ENCODE measurements at regions of chr2 and their contacts with region 1.

Region 1: DNA sequence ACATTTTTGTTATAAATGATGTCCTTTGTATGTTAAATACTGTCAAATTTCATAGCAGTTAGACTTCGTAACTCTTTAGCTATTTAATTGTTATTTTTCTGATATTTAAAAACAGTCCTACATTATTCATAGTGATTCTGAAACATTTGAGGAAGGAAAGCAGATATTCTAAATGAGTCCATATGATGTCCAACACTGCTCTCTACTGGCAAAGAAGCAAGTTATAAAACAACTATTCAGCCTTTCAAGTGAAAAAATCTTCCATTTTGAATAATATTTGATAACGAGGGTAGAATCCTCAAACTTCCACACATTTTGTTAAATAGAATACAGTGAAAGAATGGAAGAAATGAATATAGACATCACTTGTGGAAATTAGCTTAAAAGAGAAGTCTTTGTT is 220.8 kb downstream of the GULP1 start:
- DNase-seq: peak; percentile 69
- H3K4me3 ChIP-seq: no peak overlapping the region
- H3K27ac ChIP-seq: no peak overlapping the region
- H3K4me1 ChIP-seq: peaks cover 2% of the 10 kb centered on the region
- H3K27me3 ChIP-seq: no peaks in the 10 kb centered on the region
- CTCF ChIP-seq: peak; percentile 9 to 32
- POLR2A ChIP-seq: no peak

Region 2: GRCh38 chr2:187594801-187595200 is 917.7 kb before region 1 on chr2:
- CTCF ChIA-PET with region 1: interaction called, 10 read pairs
- POLR2A ChIA-PET with region 1: no interaction called
- dilution Hi-C with region 1: no loop called
- intact Hi-C with region 1: loop called (anchors 5 kb)
- DNase-seq: peak; percentile 44
- H3K4me3 ChIP-seq: no peak overlapping the region
- H3K27ac ChIP-seq: no peak overlapping the region
- H3K4me1 ChIP-seq: no peaks in the 10 kb centered on the region
- H3K27me3 ChIP-seq: no peaks in the 10 kb centered on the region
- CTCF ChIP-seq: no peak
- POLR2A ChIP-seq: no peak

Region 3: GRCh38 chr2:188381614-188382013 is 130.8 kb before region 1 on chr2:
- CTCF ChIA-PET with region 1: no interaction called
- POLR2A ChIA-PET with region 1: no interaction called
- dilution Hi-C with region 1: no loop called
- intact Hi-C with region 1: loop called (anchors 5 kb)
- DNase-seq: peak; percentile 83
- H3K4me3 ChIP-seq: peak overlapping the region in 1 of 3 experiments; percentile 12
- H3K27ac ChIP-seq: peak overlapping the region; percentile 73
- H3K4me1 ChIP-seq: peaks cover 28% of the 10 kb centered on the region
- H3K27me3 ChIP-seq: no peaks in the 10 kb centered on the region
- CTCF ChIP-seq: no peak
- POLR2A ChIP-seq: no peak